ENCODE measurements at regions of chr18 and their contacts with region 1.

Region 1: DNA sequence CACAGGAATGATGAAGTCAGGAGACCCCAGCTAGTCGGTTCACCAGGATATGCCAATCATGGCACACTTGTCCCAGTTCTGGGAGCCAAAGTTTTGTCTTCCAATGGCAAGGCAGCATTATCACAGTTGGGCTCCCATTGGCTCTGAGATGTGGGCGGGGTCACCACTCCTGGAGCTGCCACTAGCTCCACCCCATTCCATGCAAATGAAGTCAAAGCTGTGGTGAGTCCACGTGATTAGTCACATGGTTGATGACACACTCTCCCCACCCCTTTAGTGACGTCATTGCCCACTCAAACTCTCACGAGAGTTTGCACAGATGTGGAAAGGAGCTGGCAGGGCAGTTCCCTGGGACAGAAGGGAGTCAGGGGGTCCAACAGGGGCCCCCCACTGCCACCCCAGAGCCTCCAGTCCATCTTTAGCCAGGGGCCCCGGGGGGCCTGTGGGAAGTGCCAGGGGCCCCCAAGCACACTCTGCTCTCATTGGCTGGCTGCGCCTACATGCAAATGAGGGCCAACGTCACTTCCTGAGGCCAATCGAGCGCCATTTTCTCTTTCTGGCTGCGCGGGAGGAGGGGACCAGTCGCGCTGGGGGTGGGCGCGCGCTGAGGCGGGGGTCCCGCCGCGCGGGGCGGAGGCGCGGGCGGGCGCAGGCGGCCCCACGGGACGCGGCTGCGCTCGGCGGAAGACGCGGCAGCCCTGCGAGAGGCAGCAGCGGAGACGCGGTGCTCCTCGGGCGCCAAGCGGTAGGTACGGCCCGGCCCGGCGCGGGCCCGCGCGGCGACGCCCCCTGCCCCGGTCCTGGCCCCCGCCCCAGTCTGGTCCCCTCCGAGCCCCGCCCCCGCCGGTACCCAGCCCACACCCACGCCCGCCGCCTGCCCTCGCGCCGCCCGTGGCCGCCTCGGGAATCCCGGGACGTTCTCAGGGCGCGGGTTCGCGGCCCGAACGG is at the start of gene ADNP2:
- DNase-seq: peak; percentile 91
- H3K4me3 Mint-ChIP-seq: peak within 1 kb of the TSS; percentile 80
- H3K27ac Mint-ChIP-seq: peak within 1 kb of the TSS; percentile 74
- H3K4me1 Mint-ChIP-seq: peaks cover 46% of the 10 kb centered on the region
- H3K27me3 Mint-ChIP-seq: no peaks in the 10 kb centered on the region
- total RNA-seq, gene ADNP2: 19.4 to 21.7 TPM

Region 2: GRCh38 chr18:79988451-79989194 is 120.4 kb before region 1 on chr18 and contains the start of gene TXNL4A:
- CTCF ChIA-PET with region 1: interaction called, 3 read pairs
- POLR2A ChIA-PET with region 1: no interaction called
- intact Hi-C with region 1: loop called (anchors 2 kb)
- DNase-seq: peak; percentile 90
- H3K4me3 Mint-ChIP-seq: peak within 1 kb of the TSS; percentile 94
- H3K27ac Mint-ChIP-seq: peak within 1 kb of the TSS; percentile 92
- H3K4me1 Mint-ChIP-seq: peaks cover 30% of the 10 kb centered on the region
- H3K27me3 Mint-ChIP-seq: no peaks in the 10 kb centered on the region
- total RNA-seq, gene TXNL4A: 169 to 175 TPM

Region 3: GRCh38 chr18:80147418-80148325 is 38.7 kb after region 1 on chr18:
- CTCF ChIA-PET with region 1: no interaction called
- POLR2A ChIA-PET with region 1: interaction called, 3 read pairs
- intact Hi-C with region 1: loop called (anchors 1 kb)
- DNase-seq: peak; percentile 88
- H3K4me3 Mint-ChIP-seq: peak overlapping the region; percentile 82
- H3K27ac Mint-ChIP-seq: peak overlapping the region; percentile 49
- H3K4me1 Mint-ChIP-seq: peaks cover 7% of the 10 kb centered on the region
- H3K27me3 Mint-ChIP-seq: peaks cover 22% of the 10 kb centered on the region